ENCODE measurements at regions of chr22 and their contacts with region 1.

Region 1: GRCh38 chr22:23054531-23055257 is 15.6 kb upstream of the GNAZ start:
- DNase-seq: peak; percentile 2
- H3K4me3 ChIP-seq: no peak overlapping the region
- H3K27ac ChIP-seq: no peak overlapping the region
- H3K4me1 ChIP-seq: no peaks in the 10 kb centered on the region
- H3K27me3 ChIP-seq: no peaks in the 10 kb centered on the region
- CTCF ChIP-seq: no peak
- POLR2A ChIP-seq: no peak

Region 2: GRCh38 chr22:23000657-23001347 is 53.9 kb before region 1 on chr22:
- intact Hi-C with region 1: loop called (anchors 10 kb)
- DNase-seq: no peak
- H3K4me3 ChIP-seq: no peak overlapping the region
- H3K27ac ChIP-seq: no peak overlapping the region
- H3K4me1 ChIP-seq: no peaks in the 10 kb centered on the region
- H3K27me3 ChIP-seq: no peaks in the 10 kb centered on the region
- CTCF ChIP-seq: no peak
- POLR2A ChIP-seq: no peak

Measured in testis (tissue), 5 donors.